ENCODE measurements at regions of chr6 and their contacts with region 1.

Region 1: GRCh38 chr6:134063966-134064445 is 11.6 kb upstream of the SLC2A12 start:
- DNase-seq: peak; percentile 77
- H3K4me3 ChIP-seq: peak overlapping the region in 1 of 2 experiments; percentile 24; a peak in 1 of 4 replicates
- H3K27ac ChIP-seq: no peak overlapping the region
- H3K4me1 ChIP-seq: peaks cover 2 to 16% of the 10 kb centered on the region in 2 experiments; a peak in 2 of 4 replicates
- H3K27me3 ChIP-seq: no peaks in the 10 kb centered on the region
- CTCF ChIP-seq: peak; percentile 88
- EP300 ChIP-seq: no peak
- RAD21 ChIP-seq: peak; percentile 88

Region 2: DNA sequence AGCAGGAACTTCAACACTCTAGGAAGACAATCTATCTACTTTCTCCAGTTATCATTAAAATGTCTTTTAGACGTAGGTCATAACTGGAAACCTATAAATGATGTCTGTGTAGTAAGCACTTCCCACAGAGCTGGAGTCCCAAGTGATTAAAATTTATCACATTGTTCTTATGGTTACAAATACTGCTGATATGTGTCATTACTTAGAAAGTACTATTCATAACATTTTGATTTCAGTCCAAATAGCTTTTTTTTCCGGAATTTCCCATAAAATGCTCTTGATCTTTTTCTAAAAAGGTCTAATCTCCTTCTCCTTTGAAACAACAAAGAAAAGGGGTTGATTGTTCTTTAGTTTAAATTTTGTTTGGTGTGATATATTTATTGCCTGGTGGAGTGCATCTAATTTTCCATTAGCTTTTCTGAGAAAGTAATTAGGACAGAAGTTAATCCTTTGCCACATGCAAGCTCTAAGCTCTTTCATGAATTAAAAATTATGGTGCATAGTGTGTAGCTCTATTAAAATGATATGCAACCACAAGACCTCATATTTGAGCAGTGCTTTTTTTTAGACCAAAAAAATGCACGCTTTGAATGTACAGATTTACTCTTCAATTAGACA is 307.8 kb before region 1 on chr6:
- CTCF ChIA-PET with region 1: no interaction called
- POLR2A ChIA-PET with region 1: no interaction called
- DNase-seq: no peak
- H3K4me3 ChIP-seq: no peak overlapping the region
- H3K27ac ChIP-seq: no peak overlapping the region
- H3K4me1 ChIP-seq: no peaks in the 10 kb centered on the region
- H3K27me3 ChIP-seq: peaks cover 3% of the 10 kb centered on the region
- CTCF ChIP-seq: no peak
- EP300 ChIP-seq: no peak
- RAD21 ChIP-seq: no peak

Region 3: DNA sequence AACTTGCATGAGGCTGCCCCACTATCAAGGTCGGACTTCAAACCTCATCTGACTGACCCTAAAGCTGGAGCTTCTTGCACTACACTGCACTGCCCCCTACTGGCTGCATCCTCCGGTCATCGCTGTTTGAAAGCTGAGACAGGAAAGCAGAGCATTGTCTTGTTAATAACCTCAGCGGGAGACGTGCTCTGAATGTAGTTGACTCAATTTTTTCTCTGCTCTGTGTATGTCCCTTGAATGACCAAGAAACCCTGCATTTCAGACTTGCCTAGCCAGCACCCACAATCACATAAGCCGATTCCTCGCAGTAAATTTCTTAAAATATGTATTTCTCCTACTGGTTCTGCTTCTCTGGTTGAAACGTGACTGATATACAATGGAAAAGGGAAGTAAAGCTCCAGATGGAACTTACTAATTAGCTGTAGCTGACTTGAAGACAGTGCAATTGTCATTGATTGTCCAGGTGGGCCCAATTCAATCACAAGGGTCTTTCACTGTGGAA is 147.3 kb before region 1 on chr6:
- CTCF ChIA-PET with region 1: interaction called, 197 read pairs
- POLR2A ChIA-PET with region 1: no interaction called
- DNase-seq: peak; percentile 60
- H3K4me3 ChIP-seq: no peak overlapping the region; a peak in 1 of 4 replicates
- H3K27ac ChIP-seq: no peak overlapping the region
- H3K4me1 ChIP-seq: peaks cover 0 to 2% of the 10 kb centered on the region in 2 experiments; a peak in 1 of 4 replicates
- H3K27me3 ChIP-seq: peaks cover 5% of the 10 kb centered on the region
- CTCF ChIP-seq: peak; percentile 94
- EP300 ChIP-seq: no peak
- RAD21 ChIP-seq: peak; percentile 88

Region 4: GRCh38 chr6:133952815-133953633 is 111.0 kb before region 1 on chr6 and contains the start of gene TBPL1:
- CTCF ChIA-PET with region 1: interaction called, 42 read pairs
- POLR2A ChIA-PET with region 1: no interaction called
- DNase-seq: peak; percentile 95
- H3K4me3 ChIP-seq: peak within 1 kb of the TSS; percentile 77 to 98
- H3K27ac ChIP-seq: peak within 1 kb of the TSS; percentile 92 to 94
- H3K4me1 ChIP-seq: peaks cover 6 to 24% of the 10 kb centered on the region in 2 experiments; a peak in 3 of 4 replicates
- H3K27me3 ChIP-seq: no peaks in the 10 kb centered on the region
- CTCF ChIP-seq: no peak
- EP300 ChIP-seq: peak; percentile 35 to 37; a peak in 1 of 4 replicates
- RAD21 ChIP-seq: no peak
- polyA plus RNA-seq, gene TBPL1: 16.3 and 22.4 TPM in 2 replicates

Region 5: DNA sequence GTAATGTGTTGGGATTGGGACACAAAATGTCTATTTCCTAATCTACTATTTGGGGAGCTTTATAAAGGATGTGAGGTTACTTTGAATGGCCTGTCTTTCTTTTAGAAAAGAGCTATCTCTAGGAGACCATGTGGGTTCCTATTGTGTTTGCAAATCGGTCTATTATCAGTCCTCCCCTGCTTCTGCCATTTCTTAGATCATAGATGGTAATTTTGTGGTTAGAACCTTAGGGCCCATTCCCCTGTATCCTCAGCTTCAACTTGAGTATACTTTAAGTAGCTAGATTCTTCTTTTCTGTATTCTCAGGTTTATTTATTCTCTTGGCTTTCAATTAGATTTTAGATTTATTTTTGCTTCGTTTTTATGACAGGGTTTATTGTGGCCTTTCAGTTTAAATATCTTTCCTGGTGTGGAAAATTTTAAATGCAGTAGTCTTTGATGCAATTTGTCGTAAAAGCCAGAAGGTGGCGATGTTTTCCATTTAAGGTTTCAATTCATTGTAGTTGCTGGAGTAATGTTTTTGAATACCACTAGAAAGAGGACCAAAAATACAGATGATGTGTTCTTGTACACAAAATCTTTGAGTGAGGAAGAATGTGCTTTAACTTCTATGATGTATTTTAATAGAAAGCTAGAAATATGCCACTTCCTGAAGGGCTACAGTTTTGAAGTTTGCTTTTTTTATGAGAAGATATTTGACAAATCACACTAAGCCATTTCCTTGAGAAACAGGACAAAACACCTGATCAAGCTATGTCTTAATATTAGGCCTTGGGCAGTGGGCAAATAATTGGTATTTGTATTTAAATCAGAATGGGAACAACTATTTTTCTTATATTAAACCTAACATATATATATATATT is 90.7 kb before region 1 on chr6:
- CTCF ChIA-PET with region 1: interaction called, 62 read pairs
- POLR2A ChIA-PET with region 1: no interaction called
- DNase-seq: peak; percentile 47
- H3K4me3 ChIP-seq: no peak overlapping the region
- H3K27ac ChIP-seq: peak overlapping the region in 1 of 2 experiments; percentile 1; a peak in 1 of 4 replicates
- H3K4me1 ChIP-seq: peaks cover 6 to 19% of the 10 kb centered on the region in 2 experiments; a peak in 2 of 4 replicates
- H3K27me3 ChIP-seq: no peaks in the 10 kb centered on the region
- CTCF ChIP-seq: peak; percentile 85
- EP300 ChIP-seq: no peak
- RAD21 ChIP-seq: peak; percentile 74

Region 6: DNA sequence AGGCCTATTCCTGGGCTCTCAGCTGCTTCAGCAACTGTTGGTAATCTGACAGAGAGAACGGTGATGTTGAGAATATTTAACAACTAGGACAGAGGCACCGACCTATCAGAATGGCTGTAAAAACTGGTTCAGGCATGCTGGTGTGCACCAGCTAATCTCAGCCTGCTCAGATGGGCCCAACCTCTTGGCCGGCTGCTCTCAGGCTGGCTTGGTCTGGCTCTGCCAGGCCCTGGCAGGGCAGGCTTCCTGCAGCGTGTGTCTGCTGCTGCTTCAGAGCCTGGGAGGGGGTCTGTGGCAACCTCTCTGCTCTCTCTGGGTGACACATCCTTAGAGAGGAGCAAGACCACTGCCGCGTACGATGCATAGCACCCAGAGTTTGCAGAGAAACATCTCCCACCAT is 16.3 kb before region 1 on chr6:
- CTCF ChIA-PET with region 1: interaction called, 41 read pairs
- POLR2A ChIA-PET with region 1: no interaction called
- DNase-seq: no peak
- H3K4me3 ChIP-seq: no peak overlapping the region
- H3K27ac ChIP-seq: no peak overlapping the region; a peak in 1 of 4 replicates
- H3K4me1 ChIP-seq: no peaks in the 10 kb centered on the region; a peak in 2 of 4 replicates
- H3K27me3 ChIP-seq: no peaks in the 10 kb centered on the region
- CTCF ChIP-seq: no peak
- EP300 ChIP-seq: no peak
- RAD21 ChIP-seq: no peak

Region 7: DNA sequence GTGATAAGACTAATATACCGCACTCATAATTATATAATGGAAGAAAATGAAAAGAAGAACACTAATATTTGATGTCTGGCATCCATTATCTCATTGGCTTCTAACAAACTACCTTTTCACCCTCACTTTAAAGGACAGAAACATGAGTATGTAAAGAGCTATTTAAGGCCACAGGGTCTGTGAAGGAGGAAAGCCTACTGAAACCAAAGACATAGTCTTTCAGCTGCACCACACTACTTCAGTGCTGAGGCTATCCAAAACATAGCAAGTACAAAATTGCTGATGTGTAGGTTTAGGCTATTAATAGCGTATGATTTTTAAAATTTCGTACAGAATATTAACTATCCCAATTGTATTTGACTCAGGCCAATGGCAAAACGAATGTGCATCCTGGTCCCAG is 26.6 kb after region 1 on chr6:
- CTCF ChIA-PET with region 1: interaction called, 20 read pairs
- POLR2A ChIA-PET with region 1: no interaction called
- DNase-seq: no peak
- H3K4me3 ChIP-seq: no peak overlapping the region
- H3K27ac ChIP-seq: no peak overlapping the region
- H3K4me1 ChIP-seq: no peaks in the 10 kb centered on the region
- H3K27me3 ChIP-seq: peaks cover 36% of the 10 kb centered on the region; the same call in 1 of the 2 replicates
- CTCF ChIP-seq: no peak
- EP300 ChIP-seq: no peak
- RAD21 ChIP-seq: no peak

Region 8: DNA sequence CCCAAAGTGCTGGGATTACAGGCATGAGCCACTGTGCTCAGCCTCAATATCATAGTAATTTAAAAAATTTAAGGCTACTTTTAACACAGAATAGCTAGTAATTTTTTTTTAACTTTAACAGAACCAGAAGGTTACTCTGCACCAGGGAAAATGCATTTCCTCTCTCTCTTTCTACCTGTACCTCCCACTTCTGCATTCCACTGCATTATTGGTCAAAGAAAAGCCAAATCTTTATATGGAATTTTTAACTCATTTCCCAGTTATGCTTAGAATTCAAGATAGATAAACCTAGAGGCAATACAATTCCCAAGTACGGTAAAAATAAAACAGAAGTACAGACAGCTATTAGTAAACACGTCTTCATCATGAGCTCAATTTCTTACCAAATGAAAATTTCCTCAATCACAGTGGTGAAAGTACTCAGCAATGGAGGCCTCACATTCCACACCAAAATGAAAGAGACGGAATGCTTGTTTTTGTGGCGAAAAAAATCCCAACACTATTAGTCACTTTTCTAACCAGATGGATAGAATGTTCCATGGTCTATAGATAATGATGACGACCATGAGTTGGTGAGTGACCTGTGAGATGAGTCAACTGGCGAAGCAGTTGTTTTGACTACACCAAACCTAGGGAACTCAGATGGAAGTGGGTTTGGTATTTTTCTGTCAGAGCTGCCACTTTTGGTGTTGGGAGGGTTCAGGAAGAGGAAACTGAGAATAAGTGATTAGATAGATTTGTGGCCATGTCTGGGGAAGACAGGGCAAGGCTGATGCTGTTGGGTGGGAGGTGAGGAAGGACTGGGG is 358.6 kb after region 1 on chr6:
- CTCF ChIA-PET with region 1: no interaction called
- POLR2A ChIA-PET with region 1: no interaction called
- DNase-seq: no peak
- H3K4me3 ChIP-seq: no peak overlapping the region
- H3K27ac ChIP-seq: peak overlapping the region; percentile 45 to 99; a peak in 3 of 4 replicates
- H3K4me1 ChIP-seq: no peaks in the 10 kb centered on the region; a peak in 1 of 4 replicates
- H3K27me3 ChIP-seq: no peaks in the 10 kb centered on the region
- CTCF ChIP-seq: no peak
- EP300 ChIP-seq: peak in 1 of 2 experiments; percentile 90; a peak in 2 of 4 replicates
- RAD21 ChIP-seq: no peak